ENCODE measurements at regions of chr7 and their contacts with region 1.

Region 1: GRCh38 chr7:34321000-34321581 is 336.9 kb upstream of the NPSR1 start:
- DNase-seq: peak; percentile 73

Region 2: GRCh38 chr7:34133983-34134782 is 186.9 kb before region 1 on chr7:
- CTCF ChIA-PET with region 1: interaction called, 16 read pairs
- POLR2A ChIA-PET with region 1: no interaction called
- DNase-seq: peak; percentile 75

Region 3: DNA sequence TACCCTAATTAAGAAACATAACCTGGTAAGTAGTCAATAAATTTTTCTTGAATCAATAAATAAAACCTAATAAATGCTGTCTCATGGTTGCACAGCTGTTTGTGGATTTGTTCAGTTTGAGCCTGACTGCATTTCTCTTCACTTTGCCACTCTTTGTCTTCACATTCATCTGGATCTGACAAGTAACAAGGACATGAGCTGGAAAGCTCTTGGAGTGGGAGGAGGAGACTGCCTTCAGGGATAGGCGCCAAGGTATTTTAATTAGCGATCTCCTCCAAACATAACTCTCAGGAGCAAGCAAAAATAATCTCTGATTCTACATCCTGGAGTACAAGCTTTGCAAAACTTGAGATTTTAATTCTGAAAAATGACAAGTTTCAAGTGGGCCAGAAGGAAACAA is 164.8 kb before region 1 on chr7:
- CTCF ChIA-PET with region 1: no interaction called
- POLR2A ChIA-PET with region 1: no interaction called
- DNase-seq: no peak

Region 4: DNA sequence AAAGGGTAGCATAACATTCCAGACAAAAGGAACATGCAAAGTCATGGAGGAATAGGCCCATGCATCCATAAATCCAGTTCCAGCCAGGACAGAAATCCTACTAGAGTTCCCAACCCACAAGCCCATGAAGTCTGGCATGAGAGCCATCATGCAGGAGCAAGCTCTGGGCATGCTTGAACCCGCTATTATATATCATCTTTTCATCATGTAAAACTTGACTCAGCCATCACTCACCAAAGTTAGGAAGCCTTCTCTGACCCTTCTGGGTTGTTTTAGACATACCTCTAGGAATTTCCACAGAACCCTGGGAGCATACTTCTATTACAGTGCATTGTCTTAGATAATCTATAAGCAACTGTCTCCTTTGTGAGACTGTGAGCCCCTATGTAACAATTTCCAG is 43.9 kb after region 1 on chr7:
- CTCF ChIA-PET with region 1: no interaction called
- POLR2A ChIA-PET with region 1: no interaction called
- DNase-seq: no peak

Region 5: GRCh38 chr7:34596892-34597291 is 275.8 kb after region 1 on chr7:
- CTCF ChIA-PET with region 1: interaction called, 10 read pairs
- POLR2A ChIA-PET with region 1: no interaction called
- DNase-seq: no peak